ENCODE measurements at regions of chr10 and their contacts with region 1.

Region 1: GRCh38 chr10:86899670-86900276 is 57.6 kb downstream of the MMRN2 start:
- DNase-seq: no peak

Region 2: DNA sequence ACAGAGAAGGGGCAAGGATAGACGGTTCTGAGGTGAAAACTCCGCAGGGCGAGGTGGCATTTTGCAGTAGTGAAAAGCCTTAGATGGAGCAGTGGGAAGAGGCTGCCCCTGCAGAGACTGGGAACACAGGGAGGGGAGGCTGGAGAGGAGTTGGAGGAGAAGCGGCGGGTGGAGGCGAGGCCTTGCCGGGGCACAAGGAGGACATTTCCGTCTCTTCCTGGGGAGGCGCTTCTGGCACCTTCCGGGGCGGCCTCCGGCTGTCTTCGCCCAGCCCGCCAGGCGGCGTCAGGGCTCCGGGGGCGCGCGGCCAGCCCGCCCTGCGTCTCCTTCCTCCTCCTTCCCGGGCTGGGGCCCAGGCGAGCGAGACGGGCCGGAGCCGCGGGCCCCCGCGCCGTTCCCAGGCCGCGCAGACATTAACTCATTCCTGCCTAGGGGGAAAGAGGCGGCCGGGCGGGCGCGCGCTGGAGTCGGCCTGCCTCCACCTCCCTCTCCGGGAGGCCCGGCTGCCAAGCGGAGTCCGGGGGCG is 188.7 kb before region 1 on chr10:
- intact Hi-C with region 1: loop called (anchors 2 kb)
- DNase-seq: peak; percentile 91

Region 3: DNA sequence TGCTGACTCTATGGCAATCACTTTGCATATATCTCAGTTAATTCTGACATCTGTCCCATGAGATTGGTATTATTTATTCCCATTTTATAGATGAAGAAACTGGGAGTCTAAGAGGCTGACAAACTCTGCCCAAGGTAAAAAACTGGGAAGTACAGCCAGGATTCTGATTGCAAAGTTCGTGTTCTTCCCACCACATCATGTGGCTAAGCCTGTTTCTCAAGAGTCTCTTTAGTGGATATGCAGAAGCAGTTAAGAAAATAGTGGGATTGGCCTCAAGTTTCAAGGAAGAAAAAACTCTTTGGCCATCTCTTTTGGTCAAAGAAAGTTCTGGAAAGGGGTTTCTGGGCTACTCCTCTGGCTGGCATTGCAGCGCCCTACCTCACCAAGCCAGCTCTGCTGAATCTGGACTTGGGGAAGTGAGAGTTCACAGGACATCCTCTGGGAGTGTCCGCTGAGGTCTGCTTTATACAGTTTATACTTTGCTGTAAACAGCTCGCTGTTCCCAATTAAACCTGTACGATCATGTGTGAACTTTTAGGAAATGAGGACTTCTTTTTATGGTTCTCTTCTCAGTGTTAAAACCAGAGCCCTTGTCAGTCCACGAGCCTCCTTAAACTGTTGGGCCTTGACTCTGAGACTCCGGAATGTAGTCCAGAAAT is 155.6 kb before region 1 on chr10:
- intact Hi-C with region 1: no loop called
- DNase-seq: no peak

Region 4: DNA sequence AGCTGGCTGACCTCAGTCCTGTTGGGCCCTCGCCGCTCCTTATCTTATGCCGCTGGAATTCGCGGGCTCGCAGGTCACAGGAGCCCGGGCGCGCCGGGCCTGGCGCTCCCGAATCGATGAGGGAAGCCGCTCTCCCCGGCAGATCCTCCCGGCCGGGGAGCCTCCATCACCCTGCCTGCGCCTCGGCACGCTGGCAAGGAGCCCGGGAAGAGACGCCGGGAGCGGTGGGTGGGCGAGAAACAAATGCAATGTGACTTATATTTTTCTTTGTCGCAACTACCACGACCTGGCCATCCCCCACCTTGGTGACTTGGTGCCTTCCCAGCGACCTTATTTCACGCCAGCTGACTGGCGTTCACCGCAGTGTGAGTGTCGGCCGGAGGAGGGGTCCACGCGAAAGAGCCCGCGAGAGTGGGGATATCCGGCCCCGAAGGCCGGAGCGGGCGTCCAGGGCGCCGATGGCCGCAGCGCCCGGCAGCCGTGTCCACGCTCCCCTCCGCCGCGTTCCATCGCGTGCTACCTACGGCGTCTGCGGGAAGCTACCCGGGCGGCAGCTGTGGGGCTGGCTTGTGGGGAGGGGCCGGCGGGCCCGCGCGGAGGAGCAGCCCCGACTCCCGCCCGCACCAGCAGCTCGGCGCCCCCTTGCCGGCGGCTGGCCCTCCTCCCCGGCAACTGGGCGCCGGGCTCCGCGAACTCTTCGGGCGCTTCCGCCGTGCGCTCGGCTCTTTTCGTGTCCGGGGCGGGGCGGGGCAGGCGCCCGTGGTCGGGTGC is 143.8 kb before region 1 on chr10:
- intact Hi-C with region 1: loop called (anchors 2 kb)
- DNase-seq: peak; percentile 93

Region 5: DNA sequence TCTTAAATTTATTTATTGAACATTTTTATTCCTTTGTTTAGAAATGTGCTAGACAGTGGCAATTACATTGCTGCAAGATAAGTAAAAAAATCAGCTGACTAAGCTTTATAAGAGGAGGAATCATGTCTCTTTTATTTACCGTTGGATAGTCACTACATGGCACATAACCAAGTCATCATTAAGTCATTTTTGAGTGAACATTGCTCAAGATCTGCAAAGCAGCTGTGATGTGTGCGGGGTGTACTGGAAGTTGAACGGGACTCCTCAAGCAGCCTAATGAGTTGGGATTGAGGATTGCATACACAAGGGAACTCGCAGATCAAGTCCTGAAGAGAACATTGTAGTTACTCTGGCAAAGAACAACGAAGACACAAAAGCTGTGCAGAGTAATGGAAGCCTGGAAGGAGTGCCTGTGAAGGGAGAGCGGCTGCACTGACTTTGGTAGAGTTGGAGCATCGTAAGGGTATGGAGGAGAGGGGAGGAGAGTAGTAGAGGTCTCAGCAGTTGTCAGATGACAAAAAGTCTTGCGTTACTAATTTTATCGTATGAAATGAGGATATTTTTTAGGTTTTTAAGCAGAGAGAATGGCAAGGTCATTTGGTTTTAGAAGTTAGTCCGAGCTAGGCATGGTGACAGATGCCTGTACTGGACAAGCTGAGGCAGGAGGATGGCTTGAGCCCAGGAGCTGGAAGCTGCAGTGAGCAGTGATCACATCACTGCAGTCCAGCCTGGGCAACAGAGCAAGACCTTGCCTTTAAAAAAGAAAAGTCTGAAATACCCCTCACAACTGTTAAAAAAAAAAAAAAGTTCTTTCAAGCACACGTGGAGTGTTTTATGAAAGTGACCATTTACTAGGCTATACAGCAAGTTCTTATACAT is 48.2 kb before region 1 on chr10:
- intact Hi-C with region 1: no loop called
- DNase-seq: no peak